ENCODE measurements at regions of chr4 and their contacts with region 1.

Region 1: GRCh38 chr4:74311696-74312313 is 3.5 kb downstream of the EPGN start:
- DNase-seq: peak; percentile 62
- ATAC-seq: peak; percentile 74
- H3K4me3 ChIP-seq: no peak overlapping the region
- H3K27ac ChIP-seq: no peak overlapping the region
- H3K4me1 ChIP-seq: peaks cover 0 to 12% of the 10 kb centered on the region in 2 experiments; a peak in 2 of 4 replicates
- H3K27me3 ChIP-seq: no peaks in the 10 kb centered on the region
- CTCF ChIP-seq: peak; percentile 57 to 76 (median 76)
- POLR2A ChIP-seq: no peak
- RAD21 ChIP-seq: peak; percentile 91

Region 2: GRCh38 chr4:73662709-73663546 is 648.9 kb before region 1 on chr4:
- CTCF ChIA-PET with region 1: no interaction called
- POLR2A ChIA-PET with region 1: no interaction called
- RAD21 ChIA-PET with region 1: no interaction called
- intact Hi-C with region 1: loop called (anchors 5 kb)
- DNase-seq: peak; percentile 21
- ATAC-seq: peak; percentile 90
- H3K4me3 ChIP-seq: no peak overlapping the region
- H3K27ac ChIP-seq: no peak overlapping the region
- H3K4me1 ChIP-seq: no peaks in the 10 kb centered on the region
- H3K27me3 ChIP-seq: no peaks in the 10 kb centered on the region
- CTCF ChIP-seq: peak; percentile 40 to 57 (median 55); a peak in 4 of 6 replicates
- POLR2A ChIP-seq: no peak
- RAD21 ChIP-seq: peak; percentile 81

Region 3: DNA sequence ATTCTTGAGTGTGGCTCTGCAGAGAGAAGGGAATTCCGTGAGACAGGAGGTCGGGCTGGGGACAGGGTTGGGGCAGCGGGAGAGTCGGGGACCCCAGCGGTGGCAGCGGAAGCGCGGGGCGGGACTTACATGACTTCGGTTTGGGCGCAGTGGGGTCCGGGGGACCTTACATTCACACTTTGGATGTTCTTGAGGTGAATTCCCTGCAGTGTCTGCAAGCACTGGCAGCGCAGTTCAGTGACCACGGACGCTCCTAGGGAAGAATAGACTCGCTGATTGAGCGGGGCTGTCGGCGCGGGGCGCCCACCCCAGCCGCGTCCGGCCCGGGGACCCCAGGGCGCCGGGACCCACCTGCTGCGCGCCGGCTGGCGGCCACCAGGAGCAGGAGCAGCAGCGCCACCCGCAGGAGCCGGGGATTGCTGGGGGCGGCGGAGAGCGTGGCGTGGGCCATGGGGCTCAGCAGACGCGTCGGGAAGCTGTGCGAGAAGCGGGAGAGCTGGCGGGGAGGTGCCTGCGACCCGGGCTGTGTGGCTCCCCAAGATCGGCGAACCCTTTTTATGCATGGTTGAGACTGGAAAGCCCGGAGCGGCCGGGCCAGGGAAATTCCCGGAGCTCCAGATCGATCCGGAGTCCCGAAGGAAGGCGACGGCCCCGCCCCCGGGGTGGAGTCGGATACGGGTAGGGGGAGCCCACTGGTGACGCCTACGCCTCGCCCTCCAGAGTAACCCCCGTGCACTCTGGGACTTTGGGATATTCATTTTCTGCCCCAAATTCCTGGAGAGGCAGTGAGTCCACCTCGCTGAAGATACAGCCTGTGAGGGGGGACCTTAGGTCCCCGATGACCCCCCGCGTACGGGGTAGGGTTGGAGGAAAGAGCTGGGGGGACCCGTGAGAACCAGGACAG is 273.4 kb before region 1 on chr4 and contains the start of gene CXCL3:
- CTCF ChIA-PET with region 1: no interaction called
- POLR2A ChIA-PET with region 1: no interaction called
- RAD21 ChIA-PET with region 1: no interaction called
- intact Hi-C with region 1: loop called (anchors 10 kb)
- DNase-seq: no peak
- ATAC-seq: peak; percentile 91
- H3K4me3 ChIP-seq: peak within 1 kb of the TSS; percentile 73 to 78
- H3K27ac ChIP-seq: peak within 1 kb of the TSS; percentile 44; the same call in 1 of the 2 replicates
- H3K4me1 ChIP-seq: peaks cover 0 to 12% of the 10 kb centered on the region in 2 experiments; a peak in 2 of 4 replicates
- H3K27me3 ChIP-seq: no peaks in the 10 kb centered on the region
- CTCF ChIP-seq: peak in 2 of 3 experiments; percentile 4 to 54; a peak in 2 of 6 replicates
- POLR2A ChIP-seq: no peak
- RAD21 ChIP-seq: no peak
- total RNA-seq, gene CXCL3: 1.9 TPM

Region 4: GRCh38 chr4:74189331-74190043 is 122.3 kb before region 1 on chr4:
- CTCF ChIA-PET with region 1: interaction called, 15 read pairs
- POLR2A ChIA-PET with region 1: no interaction called
- RAD21 ChIA-PET with region 1: interaction called in 1 of 2 experiments, 5 read pairs
- intact Hi-C with region 1: loop called (anchors 1 kb)
- DNase-seq: peak; percentile 72
- ATAC-seq: peak; percentile 73
- H3K4me3 ChIP-seq: no peak overlapping the region
- H3K27ac ChIP-seq: no peak overlapping the region
- H3K4me1 ChIP-seq: peaks cover 0 to 7% of the 10 kb centered on the region in 2 experiments; a peak in 1 of 4 replicates
- H3K27me3 ChIP-seq: no peaks in the 10 kb centered on the region
- CTCF ChIP-seq: peak; percentile 64 to 81 (median 76)
- POLR2A ChIP-seq: no peak
- RAD21 ChIP-seq: peak; percentile 87

Region 5: GRCh38 chr4:74228691-74229640 is 82.8 kb before region 1 on chr4:
- CTCF ChIA-PET with region 1: interaction called, 85 read pairs
- POLR2A ChIA-PET with region 1: interaction called, 4 read pairs
- RAD21 ChIA-PET with region 1: interaction called, 10 to 14 read pairs
- intact Hi-C with region 1: loop called (anchors 1 kb)
- DNase-seq: peak; percentile 72
- ATAC-seq: peak; percentile 92
- H3K4me3 ChIP-seq: no peak overlapping the region
- H3K27ac ChIP-seq: no peak overlapping the region
- H3K4me1 ChIP-seq: peaks cover 3 to 35% of the 10 kb centered on the region in 2 experiments
- H3K27me3 ChIP-seq: no peaks in the 10 kb centered on the region
- CTCF ChIP-seq: peak; percentile 81 to 97 (median 89); a peak in 5 of 6 replicates
- POLR2A ChIP-seq: no peak
- RAD21 ChIP-seq: peak; percentile 87

Region 6: GRCh38 chr4:74244049-74244448 is 67.8 kb before region 1 on chr4:
- CTCF ChIA-PET with region 1: no interaction called
- POLR2A ChIA-PET with region 1: no interaction called
- RAD21 ChIA-PET with region 1: no interaction called
- intact Hi-C with region 1: no loop called
- DNase-seq: no peak
- ATAC-seq: no peak
- H3K4me3 ChIP-seq: no peak overlapping the region
- H3K27ac ChIP-seq: no peak overlapping the region
- H3K4me1 ChIP-seq: no peaks in the 10 kb centered on the region
- H3K27me3 ChIP-seq: no peaks in the 10 kb centered on the region
- CTCF ChIP-seq: no peak
- POLR2A ChIP-seq: no peak
- RAD21 ChIP-seq: no peak

Region 7: GRCh38 chr4:74335341-74336021 is 23.7 kb after region 1 on chr4:
- CTCF ChIA-PET with region 1: no interaction called
- POLR2A ChIA-PET with region 1: no interaction called
- RAD21 ChIA-PET with region 1: no interaction called
- intact Hi-C with region 1: no loop called
- DNase-seq: no peak
- ATAC-seq: no peak
- H3K4me3 ChIP-seq: no peak overlapping the region
- H3K27ac ChIP-seq: no peak overlapping the region
- H3K4me1 ChIP-seq: peaks cover 0 to 9% of the 10 kb centered on the region in 2 experiments; a peak in 1 of 4 replicates
- H3K27me3 ChIP-seq: no peaks in the 10 kb centered on the region
- CTCF ChIP-seq: no peak
- POLR2A ChIP-seq: no peak
- RAD21 ChIP-seq: no peak

Region 8: DNA sequence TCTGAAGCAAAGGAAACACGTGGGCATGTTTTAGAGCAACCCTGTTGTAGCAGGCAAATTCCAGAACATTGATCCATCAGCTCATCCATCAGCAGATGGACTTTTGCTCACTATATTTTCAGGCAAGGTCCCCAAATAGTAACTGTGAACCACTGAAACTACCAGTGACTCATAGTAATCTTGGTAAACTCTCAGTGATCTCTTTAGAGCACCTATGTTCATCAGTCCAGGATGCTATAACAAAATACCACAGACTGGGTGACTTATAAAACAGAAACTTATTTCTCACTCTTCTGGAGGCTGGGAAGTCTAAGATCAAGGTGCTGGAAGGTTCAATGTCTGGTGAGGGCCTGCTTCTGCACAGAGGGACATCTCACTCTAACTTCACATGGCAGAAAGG is 511.4 kb after region 1 on chr4:
- CTCF ChIA-PET with region 1: no interaction called
- POLR2A ChIA-PET with region 1: no interaction called
- RAD21 ChIA-PET with region 1: no interaction called
- intact Hi-C with region 1: no loop called
- DNase-seq: no peak
- ATAC-seq: no peak
- H3K4me3 ChIP-seq: no peak overlapping the region
- H3K27ac ChIP-seq: no peak overlapping the region
- H3K4me1 ChIP-seq: no peaks in the 10 kb centered on the region
- H3K27me3 ChIP-seq: no peaks in the 10 kb centered on the region
- CTCF ChIP-seq: no peak
- POLR2A ChIP-seq: no peak
- RAD21 ChIP-seq: no peak